ENCODE measurements at regions of chr1 and their contacts with region 1.

Region 1: DNA sequence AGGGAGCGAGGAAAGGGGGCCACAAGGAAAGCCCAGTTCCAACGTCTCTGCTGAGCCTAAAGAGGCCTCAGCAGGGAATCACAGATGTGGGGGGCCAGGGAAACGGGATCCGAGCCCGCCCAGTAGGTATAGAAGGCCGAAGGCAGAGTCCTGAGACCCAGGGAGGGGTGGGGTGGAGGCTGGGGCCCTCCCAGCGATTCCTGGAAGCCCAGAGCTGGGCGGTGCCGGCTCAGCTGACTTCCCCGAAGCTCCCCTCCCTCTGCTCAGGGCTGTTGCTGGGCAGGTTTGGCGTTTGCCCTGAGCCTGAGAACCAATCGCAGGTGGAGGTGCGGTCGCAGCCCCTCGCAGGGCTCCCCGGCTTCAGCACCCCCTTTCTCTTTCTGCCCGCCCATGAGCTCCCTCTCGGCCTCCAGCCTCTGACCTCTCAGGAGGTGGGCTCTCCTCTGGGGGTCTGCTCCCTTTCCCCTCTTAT is 12.8 kb downstream of the ADAMTSL4 start:
- DNase-seq: peak; percentile 91
- H3K4me3 Mint-ChIP-seq: peak overlapping the region; percentile 98
- H3K27ac Mint-ChIP-seq: peak overlapping the region; percentile 98
- H3K4me1 Mint-ChIP-seq: peaks cover 64% of the 10 kb centered on the region
- H3K27me3 Mint-ChIP-seq: no peaks in the 10 kb centered on the region

Region 2: GRCh38 chr1:150464422-150464826 is 97.6 kb before region 1 on chr1:
- intact Hi-C with region 1: loop called (anchors 1 kb)
- DNase-seq: peak; percentile 50
- H3K4me3 Mint-ChIP-seq: no peak overlapping the region
- H3K27ac Mint-ChIP-seq: peak overlapping the region; percentile 63
- H3K4me1 Mint-ChIP-seq: peaks cover 5% of the 10 kb centered on the region
- H3K27me3 Mint-ChIP-seq: no peaks in the 10 kb centered on the region

Region 3: GRCh38 chr1:150613061-150613920 is 51.3 kb after region 1 on chr1:
- intact Hi-C with region 1: loop called (anchors 1 kb)
- DNase-seq: peak; percentile 49
- H3K4me3 Mint-ChIP-seq: peak overlapping the region; percentile 53
- H3K27ac Mint-ChIP-seq: peak overlapping the region; percentile 98
- H3K4me1 Mint-ChIP-seq: peaks cover 62% of the 10 kb centered on the region
- H3K27me3 Mint-ChIP-seq: no peaks in the 10 kb centered on the region

Region 4: DNA sequence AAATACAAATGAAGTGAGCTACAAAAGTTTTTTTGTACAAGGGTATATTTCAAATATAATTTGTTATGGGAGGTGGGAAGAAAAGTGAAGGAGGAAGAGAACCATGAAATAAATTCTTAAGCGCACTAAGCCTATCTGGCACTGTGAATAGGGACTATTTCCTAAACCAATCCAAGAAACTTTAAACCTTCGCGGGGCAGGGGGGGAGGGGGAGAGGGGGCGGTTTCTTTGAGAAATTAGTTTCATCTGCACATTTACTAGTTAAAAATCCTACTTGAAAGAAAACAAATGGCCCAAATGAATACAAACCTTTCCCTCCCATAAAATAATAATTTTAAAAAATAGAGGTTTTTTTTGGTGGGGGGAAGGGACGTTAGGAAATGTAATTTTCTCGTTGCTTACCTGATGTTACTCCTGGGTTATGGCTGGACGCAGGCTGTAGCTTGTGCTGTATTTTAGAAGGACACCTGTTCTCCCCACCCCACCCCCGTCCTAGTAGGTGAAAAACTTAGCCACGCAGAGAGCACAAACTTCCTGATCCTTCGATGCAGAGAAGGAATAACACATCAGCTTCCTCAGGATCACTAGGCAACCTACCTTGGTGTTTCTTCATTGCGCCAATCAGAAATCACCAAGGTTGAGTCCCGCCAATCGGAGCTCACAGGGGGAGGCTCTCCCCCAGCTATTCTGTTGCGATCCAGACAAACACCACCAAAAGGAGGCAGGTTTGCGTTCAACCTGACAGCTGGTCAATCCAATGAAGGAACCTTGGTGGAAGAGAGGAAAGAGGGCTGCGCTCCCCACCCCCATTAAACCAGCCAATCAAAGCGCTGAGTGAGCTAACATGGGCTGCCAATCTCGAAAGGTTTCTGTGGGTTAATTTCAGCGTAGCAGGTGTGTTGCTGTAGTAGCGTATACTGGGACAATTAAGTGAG is 134.8 kb after region 1 on chr1 and contains the start of gene GOLPH3L:
- intact Hi-C with region 1: loop called (anchors 2 kb)
- DNase-seq: peak; percentile 89
- H3K4me3 Mint-ChIP-seq: peak within 1 kb of the TSS; percentile 91
- H3K27ac Mint-ChIP-seq: peak within 1 kb of the TSS; percentile 85
- H3K4me1 Mint-ChIP-seq: peaks cover 33% of the 10 kb centered on the region
- H3K27me3 Mint-ChIP-seq: peaks cover 12% of the 10 kb centered on the region
- total RNA-seq, gene GOLPH3L: 19.1 and 20.5 TPM in 2 replicates

Region 5: DNA sequence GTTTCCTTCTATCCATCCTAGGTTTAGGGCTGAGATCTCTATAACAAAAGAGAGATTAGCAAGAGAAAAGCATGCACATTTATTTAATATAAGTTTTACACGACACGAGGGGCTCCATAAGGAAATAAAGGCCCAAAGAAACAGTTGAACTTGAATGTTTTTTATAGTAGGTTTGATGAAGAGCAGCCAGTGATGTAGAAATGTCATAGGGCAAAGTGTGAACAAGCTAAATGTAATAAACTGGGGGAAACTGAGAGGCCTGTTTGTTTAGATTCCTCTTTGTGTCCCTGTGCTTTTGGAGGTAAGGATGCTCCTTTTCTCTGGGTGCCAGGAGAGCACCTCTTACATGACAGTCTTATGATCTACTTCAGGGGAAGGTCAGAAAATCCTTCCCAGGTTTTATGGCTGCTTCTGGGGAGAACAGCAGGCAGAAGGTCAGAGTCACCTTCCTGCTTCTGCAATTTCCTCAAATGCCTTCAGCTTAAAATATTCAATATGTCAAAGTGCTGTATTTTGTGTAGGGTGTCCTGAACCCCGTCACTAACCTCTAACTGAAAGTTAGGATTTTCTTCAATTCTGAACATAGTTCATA is 168.2 kb after region 1 on chr1:
- intact Hi-C with region 1: no loop called
- DNase-seq: no peak
- H3K4me3 Mint-ChIP-seq: no peak overlapping the region
- H3K27ac Mint-ChIP-seq: no peak overlapping the region
- H3K4me1 Mint-ChIP-seq: no peaks in the 10 kb centered on the region
- H3K27me3 Mint-ChIP-seq: no peaks in the 10 kb centered on the region

Region 6: GRCh38 chr1:150979092-150980056 is 417.4 kb after region 1 on chr1:
- intact Hi-C with region 1: loop called (anchors 2 kb)
- DNase-seq: peak; percentile 80
- H3K4me3 Mint-ChIP-seq: no peak overlapping the region
- H3K27ac Mint-ChIP-seq: no peak overlapping the region
- H3K4me1 Mint-ChIP-seq: peaks cover 32% of the 10 kb centered on the region
- H3K27me3 Mint-ChIP-seq: no peaks in the 10 kb centered on the region

Region 7: DNA sequence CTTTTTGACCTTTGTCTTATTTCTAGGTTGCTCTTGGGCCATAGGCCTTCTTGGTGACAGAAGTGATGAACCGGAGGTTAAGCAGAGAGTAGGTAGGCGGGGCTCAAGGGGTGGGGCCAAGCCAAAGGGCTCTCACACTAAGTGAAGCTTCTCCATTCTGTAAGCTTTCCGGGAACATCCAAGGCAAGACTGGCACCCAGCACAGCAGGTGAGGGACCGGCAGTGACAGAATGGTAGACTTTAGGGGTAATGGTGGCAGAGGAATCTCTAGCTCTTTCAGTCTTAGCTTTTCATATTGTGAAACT is 594.5 kb after region 1 on chr1 and contains the start of gene TNFAIP8L2:
- intact Hi-C with region 1: loop called (anchors 5 kb)
- DNase-seq: peak; percentile 72
- H3K4me3 Mint-ChIP-seq: peak within 1 kb of the TSS; percentile 92
- H3K27ac Mint-ChIP-seq: peak within 1 kb of the TSS; percentile 99
- H3K4me1 Mint-ChIP-seq: peaks cover 42% of the 10 kb centered on the region
- H3K27me3 Mint-ChIP-seq: no peaks in the 10 kb centered on the region
- total RNA-seq, gene TNFAIP8L2: 38.0 and 38.5 TPM in 2 replicates

Measured in activated T-helper 1 cell treated with anti-CD3 and anti-CD28 coated beads, Interleukin-12 subunit alpha, Interleukin-12 subunit beta, Interleukin-2, Interleukin-4 antibody, amounts not matched to agents 30 ng/mL and 10 ng/mL and 1 ng/mL, durations not matched to agents 14 hours and 24 hours and 36 hours (primary cell).